ENCODE measurements at regions of chr2 and their contacts with region 1.

Region 1: DNA sequence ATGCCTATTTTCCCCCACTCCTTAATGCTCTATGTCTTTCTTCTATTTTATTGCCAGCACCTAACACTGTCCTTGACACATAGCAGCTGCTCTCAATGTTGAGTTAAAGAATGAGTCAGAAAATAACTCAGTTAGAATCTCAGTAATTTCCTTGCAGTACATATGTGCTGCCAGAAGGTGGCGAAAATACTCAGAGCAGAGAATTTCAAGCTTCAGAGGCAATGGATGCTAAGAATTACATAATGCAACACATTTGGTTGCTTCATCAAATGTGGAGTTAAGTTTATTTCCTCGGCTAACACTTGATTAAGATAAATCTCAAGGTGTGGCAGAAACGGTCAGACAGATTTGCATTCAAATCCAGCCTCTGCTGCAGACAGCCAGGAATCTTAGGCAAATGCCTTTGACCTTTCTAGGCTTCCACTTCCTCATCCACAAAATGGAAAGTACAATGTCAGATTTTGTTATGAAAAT is 105.6 kb downstream of the VSNL1 start:
- DNase-seq: peak; percentile 38 to 68 (median 44)
- ATAC-seq: peak; percentile 64
- H3K4me3 ChIP-seq: no peak overlapping the region
- H3K27ac ChIP-seq: no peak overlapping the region
- H3K4me1 ChIP-seq: peaks cover 16 to 25% of the 10 kb centered on the region in 2 experiments
- H3K27me3 ChIP-seq: no peaks in the 10 kb centered on the region
- CTCF ChIP-seq: peak; percentile 52 to 83 (median 77); a peak in 5 of 6 replicates
- EP300 ChIP-seq: no peak
- POLR2A ChIP-seq: no peak
- RAD21 ChIP-seq: peak; percentile 52 to 81; a peak in 3 of 4 replicates

Region 2: GRCh38 chr2:17518212-17519154 is 127.6 kb before region 1 on chr2 and contains the start of gene RAD51AP2:
- CTCF ChIA-PET with region 1: no interaction called
- POLR2A ChIA-PET with region 1: no interaction called
- in situ Hi-C with region 1: no loop called
- intact Hi-C with region 1: loop called (anchors 5 kb)
- DNase-seq: peak; percentile 89 to 92 (median 91)
- ATAC-seq: peak; percentile 96
- H3K4me3 ChIP-seq: peak within 1 kb of the TSS; percentile 45
- H3K27ac ChIP-seq: peak within 1 kb of the TSS; percentile 82
- H3K4me1 ChIP-seq: peaks cover 3 to 6% of the 10 kb centered on the region in 2 experiments; a peak in 3 of 5 replicates
- H3K27me3 ChIP-seq: no peaks in the 10 kb centered on the region
- CTCF ChIP-seq: peak in 1 of 3 experiments; percentile 76; a peak in 2 of 6 replicates
- EP300 ChIP-seq: no peak
- POLR2A ChIP-seq: peak; percentile 80
- RAD21 ChIP-seq: no peak
- polyA plus RNA-seq, gene RAD51AP2: 0.01 TPM in 1 of 2 experiments, not detected in the other

Region 3: GRCh38 chr2:17830053-17831034 is 184.2 kb after region 1 on chr2:
- CTCF ChIA-PET with region 1: interaction called, 3 read pairs
- POLR2A ChIA-PET with region 1: no interaction called
- in situ Hi-C with region 1: no loop called
- intact Hi-C with region 1: loop called (anchors 2 kb)
- DNase-seq: peak; percentile 69 to 74 (median 72)
- ATAC-seq: peak; percentile 99
- H3K4me3 ChIP-seq: no peak overlapping the region
- H3K27ac ChIP-seq: no peak overlapping the region
- H3K4me1 ChIP-seq: peaks cover 0 to 6% of the 10 kb centered on the region in 2 experiments; a peak in 2 of 5 replicates
- H3K27me3 ChIP-seq: peaks cover 8 to 11% of the 10 kb centered on the region in 2 experiments; a peak in 3 of 5 replicates
- CTCF ChIP-seq: peak; percentile 89 to 93 (median 89)
- EP300 ChIP-seq: no peak
- POLR2A ChIP-seq: no peak
- RAD21 ChIP-seq: peak; percentile 40 to 70

Region 4: GRCh38 chr2:17879101-17879912 is 233.2 kb after region 1 on chr2:
- CTCF ChIA-PET with region 1: no interaction called
- POLR2A ChIA-PET with region 1: no interaction called
- in situ Hi-C with region 1: no loop called
- intact Hi-C with region 1: no loop called
- DNase-seq: peak; percentile 23 to 45 (median 33)
- ATAC-seq: peak; percentile 60
- H3K4me3 ChIP-seq: peak overlapping the region; percentile 47; the same call in 1 of the 2 replicates
- H3K27ac ChIP-seq: no peak overlapping the region
- H3K4me1 ChIP-seq: peaks cover 5 to 22% of the 10 kb centered on the region in 2 experiments; a peak in 3 of 5 replicates
- H3K27me3 ChIP-seq: peaks cover 27 to 45% of the 10 kb centered on the region in 2 experiments
- CTCF ChIP-seq: no peak
- EP300 ChIP-seq: no peak
- POLR2A ChIP-seq: no peak
- RAD21 ChIP-seq: no peak

Measured in K562 (cell line).